Left ventricle myocardium inferior (tissue), 1 donor: ENCODE measurements at regions of chr18 and their contacts with region 1.

Region 1: GRCh38 chr18:74495581-74496507 is at the start of gene CNDP2:
- DNase-seq: peak; percentile 100
- H3K4me3 ChIP-seq: peak within 1 kb of the TSS; percentile 87
- H3K27ac ChIP-seq: peak within 1 kb of the TSS; percentile 95
- H3K4me1 ChIP-seq: peaks cover 64% of the 10 kb centered on the region
- H3K27me3 ChIP-seq: no peaks in the 10 kb centered on the region
- CTCF ChIP-seq: no peak
- total RNA-seq, gene CNDP2: 71.0 TPM

Region 2: DNA sequence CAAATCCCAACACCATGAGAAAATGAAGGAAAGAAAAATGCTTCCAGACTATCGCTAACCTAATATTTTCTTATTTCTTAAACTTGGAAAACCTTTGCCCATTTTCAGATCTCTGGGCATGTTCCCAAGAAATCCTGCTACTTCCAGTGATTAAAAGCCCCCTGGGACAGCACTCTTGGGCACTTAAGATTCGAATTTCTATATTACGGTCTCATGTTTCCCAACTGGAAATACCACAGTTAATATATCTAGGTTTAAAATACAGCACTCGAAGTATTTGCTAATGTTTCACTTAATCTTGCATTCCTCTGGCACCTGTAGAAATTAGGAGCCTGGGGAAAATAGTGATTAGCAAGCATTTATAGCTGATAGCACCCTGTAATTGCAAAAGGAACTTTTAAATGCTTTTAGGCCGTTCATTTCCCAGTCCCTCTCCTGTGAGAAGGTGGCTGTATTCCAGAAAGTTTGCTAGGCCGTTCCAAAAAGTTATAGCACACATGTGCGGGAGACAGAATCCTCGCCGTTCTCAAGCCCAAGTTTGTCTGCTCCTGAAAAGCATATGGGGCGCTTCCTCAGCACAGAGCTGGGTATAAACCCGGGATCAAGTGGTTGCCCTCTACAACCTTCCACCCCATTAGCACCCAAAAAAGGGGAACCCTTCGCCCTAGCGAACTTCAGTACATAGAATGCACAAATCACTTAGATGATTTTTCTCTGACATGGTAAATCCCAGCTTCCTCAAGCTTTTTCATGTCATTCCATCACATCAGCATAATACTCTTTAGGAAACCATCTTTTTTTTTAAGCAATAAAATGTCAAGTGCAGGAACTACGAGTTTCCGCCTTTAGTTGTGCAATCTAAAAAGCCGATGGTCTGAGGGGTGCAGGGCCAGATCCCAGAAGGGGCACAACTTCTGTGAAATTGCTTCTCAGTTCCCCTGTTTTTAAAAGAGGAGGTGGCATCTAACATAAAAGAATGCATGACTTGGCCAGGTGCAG is 99.4 kb before region 1 on chr18:
- intact Hi-C with region 1: no loop called
- DNase-seq: no peak
- H3K4me3 ChIP-seq: no peak overlapping the region
- H3K27ac ChIP-seq: peak overlapping the region; percentile 51
- H3K4me1 ChIP-seq: peaks cover 41% of the 10 kb centered on the region
- H3K27me3 ChIP-seq: peaks cover 3% of the 10 kb centered on the region
- CTCF ChIP-seq: no peak

Region 3: DNA sequence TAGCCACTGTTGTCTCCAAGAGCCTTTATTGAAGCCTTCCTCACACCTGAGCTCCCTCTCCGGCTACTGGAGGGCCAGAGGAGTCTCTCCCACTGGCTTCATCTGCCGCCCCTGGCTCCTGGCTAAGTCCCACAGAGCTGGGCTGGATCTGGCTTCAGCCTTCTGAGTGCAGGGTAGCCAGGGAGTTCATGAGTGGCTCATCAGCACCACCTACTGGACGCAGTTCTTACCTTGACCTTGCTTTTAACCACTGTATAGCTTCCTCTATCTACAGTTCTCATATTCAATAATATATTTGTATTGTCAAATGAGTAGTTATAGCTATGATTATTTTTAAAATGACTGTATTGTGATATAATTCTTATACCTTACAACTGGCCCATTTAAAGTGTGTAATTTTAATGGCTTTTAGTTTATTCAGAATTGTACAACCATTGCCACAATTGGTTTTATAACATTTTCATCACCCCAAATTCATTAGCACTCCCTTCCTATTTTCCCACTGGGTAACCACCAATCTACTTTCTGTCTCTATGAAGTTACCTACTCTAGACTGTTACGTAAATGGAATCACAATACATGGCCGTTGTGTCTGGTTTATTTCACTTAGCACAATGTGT is 56.2 kb after region 1 on chr18:
- intact Hi-C with region 1: loop called (anchors 5 kb)
- DNase-seq: peak; percentile 82
- H3K4me3 ChIP-seq: no peak overlapping the region
- H3K27ac ChIP-seq: no peak overlapping the region
- H3K4me1 ChIP-seq: peaks cover 19% of the 10 kb centered on the region
- H3K27me3 ChIP-seq: no peaks in the 10 kb centered on the region
- CTCF ChIP-seq: peak; percentile 88